Mammary epithelial cell (primary cell): ENCODE measurements at regions of chr12 and their contacts with region 1.

Region 1: GRCh38 chr12:14239350-14239934 is 126.0 kb upstream of the ATF7IP start:
- DNase-seq: peak; percentile 46
- H3K4me3 ChIP-seq: no peak overlapping the region
- H3K27ac ChIP-seq: no peak overlapping the region
- H3K4me1 ChIP-seq: peaks cover 5% of the 10 kb centered on the region
- H3K27me3 ChIP-seq: no peaks in the 10 kb centered on the region
- CTCF ChIP-seq: peak in 1 of 2 donors; percentile 18

Region 2: DNA sequence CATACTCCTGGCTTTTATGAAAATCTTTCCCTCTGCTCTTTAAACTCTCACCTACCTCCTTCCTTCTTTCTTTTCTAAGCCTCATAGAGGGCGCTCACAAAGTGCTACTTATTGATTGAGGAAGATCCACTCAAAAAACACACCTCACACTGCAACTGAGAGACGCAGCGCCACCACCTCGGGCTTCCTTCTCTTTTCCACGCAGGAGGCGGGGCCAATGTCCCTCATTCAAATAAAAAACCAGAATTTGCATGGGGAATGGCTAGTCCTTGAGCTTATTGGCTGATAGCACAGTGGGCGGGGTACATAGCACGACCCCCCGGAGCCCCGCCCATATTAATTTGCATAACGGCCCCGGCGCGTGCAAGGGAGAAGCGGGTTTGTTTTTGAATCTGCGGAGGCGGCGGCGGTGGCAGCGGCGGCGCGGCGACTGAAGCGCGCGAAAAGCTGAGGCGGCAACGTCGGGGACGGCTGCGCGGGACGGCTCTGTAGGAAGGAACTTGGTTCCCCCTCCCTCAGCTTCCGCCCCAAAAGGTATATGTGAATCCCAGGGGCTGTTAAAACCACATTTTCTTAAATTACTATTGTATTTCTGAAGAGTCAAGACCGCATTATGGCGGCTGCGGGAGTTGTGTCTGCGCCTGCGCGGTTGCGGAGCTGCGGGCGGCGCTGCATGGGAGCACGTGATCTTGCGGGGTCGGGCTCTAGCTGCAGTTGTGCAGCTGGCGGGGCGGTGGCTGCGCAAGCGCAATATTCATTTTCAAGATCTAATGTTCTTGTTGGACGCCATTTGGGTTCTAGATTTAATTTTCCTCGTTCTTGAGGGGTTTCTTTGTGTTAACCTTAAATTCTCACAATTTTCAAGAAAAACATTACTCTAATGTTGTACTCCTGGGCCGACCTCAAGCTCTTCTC is 126.1 kb after region 1 on chr12 and contains the start of gene ATF7IP:
- CTCF ChIA-PET with region 1: interaction called, 4 read pairs
- dilution Hi-C with region 1: no loop called
- in situ Hi-C with region 1: no loop called
- intact Hi-C with region 1: loop called (anchors 1 kb)
- DNase-seq: peak; percentile 95
- H3K4me3 ChIP-seq: peak within 1 kb of the TSS; percentile 76 to 100 (median 78)
- H3K27ac ChIP-seq: peak within 1 kb of the TSS; percentile 95
- H3K4me1 ChIP-seq: no peaks in the 10 kb centered on the region
- H3K27me3 ChIP-seq: no peaks in the 10 kb centered on the region
- CTCF ChIP-seq: peak; percentile 7 to 36
- total RNA-seq, gene ATF7IP: 33.3 to 41.0 TPM

Region 3: DNA sequence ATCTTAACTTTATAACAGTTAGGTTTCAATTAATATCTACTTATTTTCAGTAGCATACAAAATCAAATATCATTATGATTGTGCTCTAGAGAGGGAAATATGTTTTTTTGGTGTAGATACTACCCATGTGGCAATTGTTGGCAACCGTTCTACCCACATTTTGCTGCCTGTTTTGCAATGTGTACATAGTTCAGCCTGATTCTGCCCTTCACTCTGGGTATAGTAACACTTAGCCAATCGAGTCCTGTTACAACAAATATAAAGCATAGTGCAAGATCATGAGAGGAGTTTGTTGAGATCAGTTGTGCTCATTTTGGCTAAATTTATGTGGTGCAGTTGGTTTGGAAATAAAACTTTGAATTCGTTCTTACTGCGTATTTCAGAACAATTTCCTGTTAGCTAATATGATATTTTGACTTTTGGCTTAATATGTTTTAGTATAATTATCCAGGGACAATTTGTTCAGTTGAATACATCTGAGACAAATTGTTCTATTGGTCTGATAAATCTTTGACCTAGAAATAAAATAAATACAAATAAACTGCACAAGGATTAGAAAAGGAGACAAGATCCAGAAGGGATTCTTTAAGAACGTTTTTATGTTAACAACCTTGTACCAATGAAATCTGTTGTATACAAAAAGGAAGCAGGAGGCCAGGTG is 202.9 kb after region 1 on chr12:
- CTCF ChIA-PET with region 1: no interaction called
- dilution Hi-C with region 1: no loop called
- in situ Hi-C with region 1: no loop called
- intact Hi-C with region 1: no loop called
- DNase-seq: no peak
- H3K4me3 ChIP-seq: no peak overlapping the region
- H3K27ac ChIP-seq: no peak overlapping the region
- H3K4me1 ChIP-seq: no peaks in the 10 kb centered on the region
- H3K27me3 ChIP-seq: no peaks in the 10 kb centered on the region
- CTCF ChIP-seq: no peak

Region 4: GRCh38 chr12:14454098-14454907 is 214.9 kb after region 1 on chr12:
- CTCF ChIA-PET with region 1: interaction called, 4 read pairs
- dilution Hi-C with region 1: no loop called
- in situ Hi-C with region 1: no loop called
- intact Hi-C with region 1: loop called (anchors 1 kb)
- DNase-seq: peak; percentile 44
- H3K4me3 ChIP-seq: no peak overlapping the region
- H3K27ac ChIP-seq: no peak overlapping the region
- H3K4me1 ChIP-seq: no peaks in the 10 kb centered on the region
- H3K27me3 ChIP-seq: no peaks in the 10 kb centered on the region
- CTCF ChIP-seq: peak; percentile 75 to 77

Region 5: GRCh38 chr12:14540801-14541462 is 301.5 kb after region 1 on chr12:
- CTCF ChIA-PET with region 1: no interaction called
- dilution Hi-C with region 1: loop called (anchors 10 kb)
- in situ Hi-C with region 1: no loop called
- intact Hi-C with region 1: no loop called
- DNase-seq: peak; percentile 16
- H3K4me3 ChIP-seq: no peak overlapping the region
- H3K27ac ChIP-seq: no peak overlapping the region
- H3K4me1 ChIP-seq: no peaks in the 10 kb centered on the region
- H3K27me3 ChIP-seq: no peaks in the 10 kb centered on the region
- CTCF ChIP-seq: no peak

Region 6: GRCh38 chr12:14664510-14664909 is 425.1 kb after region 1 on chr12:
- CTCF ChIA-PET with region 1: no interaction called
- dilution Hi-C with region 1: no loop called
- in situ Hi-C with region 1: loop called in 1 of 2 experiments (anchors 25 kb)
- intact Hi-C with region 1: loop called (anchors 1 kb)
- DNase-seq: peak; percentile 23
- H3K4me3 ChIP-seq: no peak overlapping the region
- H3K27ac ChIP-seq: no peak overlapping the region
- H3K4me1 ChIP-seq: no peaks in the 10 kb centered on the region
- H3K27me3 ChIP-seq: peaks cover 1% of the 10 kb centered on the region
- CTCF ChIP-seq: peak; percentile 54 to 68